ENCODE measurements at regions of chr3 and their contacts with region 1.

Region 1: DNA sequence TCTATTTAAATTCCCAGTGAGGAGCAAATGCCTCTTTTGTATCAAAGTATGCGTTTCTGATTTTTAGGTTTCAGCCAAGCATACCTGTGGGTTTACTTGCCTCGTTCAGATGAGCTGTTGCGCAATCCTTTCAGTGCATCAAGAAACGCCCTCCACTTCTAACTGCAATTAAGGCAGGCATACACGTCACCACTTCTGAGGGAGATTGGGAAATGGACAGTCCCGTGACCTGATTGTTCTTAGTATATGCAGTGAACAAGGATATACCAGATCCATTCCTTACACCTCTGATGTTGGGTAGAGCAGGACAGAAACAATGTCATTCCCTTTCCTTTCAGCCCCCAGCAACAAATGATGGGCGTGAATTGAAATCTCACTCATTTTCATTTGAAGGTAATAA is 219.0 kb downstream of the ITPR1 start:
- DNase-seq: no peak
- ATAC-seq: no peak
- H3K4me3 ChIP-seq: no peak overlapping the region
- H3K27ac ChIP-seq: no peak overlapping the region
- H3K4me1 ChIP-seq: no peaks in the 10 kb centered on the region
- H3K27me3 ChIP-seq: no peaks in the 10 kb centered on the region
- CTCF ChIP-seq: no peak
- EP300 ChIP-seq: no peak
- POLR2A ChIP-seq: no peak
- RAD21 ChIP-seq: no peak

Region 2: DNA sequence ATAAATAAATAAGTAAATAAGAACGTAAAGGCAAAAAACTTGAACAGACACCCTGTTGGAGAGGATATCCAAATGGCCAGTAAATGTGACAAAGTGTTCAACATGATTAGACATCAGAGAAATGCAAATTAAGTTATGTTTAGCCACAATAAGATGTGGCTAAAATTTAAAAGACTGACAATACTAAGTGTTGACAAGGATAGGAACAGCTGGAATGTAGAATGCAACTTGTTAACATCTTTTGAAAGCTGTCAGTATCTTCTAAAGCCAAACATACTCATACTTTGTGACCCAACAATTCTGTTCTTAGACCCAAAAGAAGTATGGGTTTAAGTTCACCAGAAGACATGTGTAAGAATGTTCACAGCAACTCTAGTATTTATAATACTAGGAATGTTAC is 21.9 kb before region 1 on chr3:
- CTCF ChIA-PET with region 1: interaction called, 10 read pairs
- POLR2A ChIA-PET with region 1: no interaction called
- RAD21 ChIA-PET with region 1: interaction called, 5 read pairs
- SMC1A ChIA-PET with region 1: interaction called, 6 read pairs
- in situ Hi-C with region 1: no loop called
- intact Hi-C with region 1: no loop called
- DNase-seq: no peak
- ATAC-seq: no peak
- H3K4me3 ChIP-seq: no peak overlapping the region
- H3K27ac ChIP-seq: no peak overlapping the region
- H3K4me1 ChIP-seq: peaks cover 10% of the 10 kb centered on the region
- H3K27me3 ChIP-seq: no peaks in the 10 kb centered on the region
- CTCF ChIP-seq: no peak
- EP300 ChIP-seq: no peak
- POLR2A ChIP-seq: no peak
- RAD21 ChIP-seq: no peak

Region 3: GRCh38 chr3:4776980-4777581 is 64.9 kb after region 1 on chr3:
- CTCF ChIA-PET with region 1: interaction called, 5 read pairs
- POLR2A ChIA-PET with region 1: no interaction called
- RAD21 ChIA-PET with region 1: interaction called, 13 read pairs
- SMC1A ChIA-PET with region 1: interaction called, 9 read pairs
- in situ Hi-C with region 1: no loop called
- intact Hi-C with region 1: loop called (anchors 1 kb)
- DNase-seq: peak; percentile 98
- ATAC-seq: peak; percentile 82
- H3K4me3 ChIP-seq: no peak overlapping the region
- H3K27ac ChIP-seq: peak overlapping the region; percentile 99
- H3K4me1 ChIP-seq: peaks cover 32% of the 10 kb centered on the region
- H3K27me3 ChIP-seq: no peaks in the 10 kb centered on the region
- CTCF ChIP-seq: no peak
- EP300 ChIP-seq: peak; percentile 90 to 97; a peak in 3 of 4 replicates
- POLR2A ChIP-seq: peak; percentile 53; the same call in 1 of the 2 replicates
- RAD21 ChIP-seq: peak; percentile 41

Region 4: GRCh38 chr3:4826237-4827100 is 114.3 kb after region 1 on chr3:
- CTCF ChIA-PET with region 1: interaction called, 8 read pairs
- POLR2A ChIA-PET with region 1: no interaction called
- RAD21 ChIA-PET with region 1: interaction called, 16 read pairs
- SMC1A ChIA-PET with region 1: interaction called, 8 read pairs
- in situ Hi-C with region 1: no loop called
- intact Hi-C with region 1: no loop called
- DNase-seq: no peak
- ATAC-seq: peak; percentile 9
- H3K4me3 ChIP-seq: no peak overlapping the region
- H3K27ac ChIP-seq: no peak overlapping the region
- H3K4me1 ChIP-seq: peaks cover 21% of the 10 kb centered on the region
- H3K27me3 ChIP-seq: no peaks in the 10 kb centered on the region
- CTCF ChIP-seq: no peak
- EP300 ChIP-seq: no peak
- POLR2A ChIP-seq: peak; percentile 31; the same call in 1 of the 2 replicates
- RAD21 ChIP-seq: no peak

Region 5: GRCh38 chr3:4898454-4899313 is 186.5 kb after region 1 on chr3:
- CTCF ChIA-PET with region 1: interaction called, 13 read pairs
- POLR2A ChIA-PET with region 1: no interaction called
- RAD21 ChIA-PET with region 1: no interaction called
- SMC1A ChIA-PET with region 1: interaction called, 4 read pairs
- in situ Hi-C with region 1: no loop called
- intact Hi-C with region 1: no loop called
- DNase-seq: peak; percentile 53
- ATAC-seq: peak; percentile 97
- H3K4me3 ChIP-seq: no peak overlapping the region; the same call in 1 of the 2 replicates
- H3K27ac ChIP-seq: peak overlapping the region; percentile 28
- H3K4me1 ChIP-seq: peaks cover 16% of the 10 kb centered on the region
- H3K27me3 ChIP-seq: no peaks in the 10 kb centered on the region
- CTCF ChIP-seq: no peak
- EP300 ChIP-seq: peak; percentile 69 to 91; a peak in 3 of 4 replicates
- POLR2A ChIP-seq: no peak
- RAD21 ChIP-seq: no peak

Region 6: GRCh38 chr3:5026331-5027218 is 314.4 kb after region 1 on chr3:
- CTCF ChIA-PET with region 1: interaction called, 63 read pairs
- POLR2A ChIA-PET with region 1: interaction called, 3 read pairs
- RAD21 ChIA-PET with region 1: interaction called, 22 read pairs
- SMC1A ChIA-PET with region 1: interaction called, 9 read pairs
- in situ Hi-C with region 1: no loop called
- intact Hi-C with region 1: loop called (anchors 1 kb)
- DNase-seq: no peak
- ATAC-seq: peak; percentile 83
- H3K4me3 ChIP-seq: peak overlapping the region; percentile 61; the same call in 1 of the 2 replicates
- H3K27ac ChIP-seq: peak overlapping the region; percentile 68
- H3K4me1 ChIP-seq: peaks cover 31% of the 10 kb centered on the region
- H3K27me3 ChIP-seq: no peaks in the 10 kb centered on the region
- CTCF ChIP-seq: peak; percentile 63 to 72 (median 71)
- EP300 ChIP-seq: no peak; a peak in 1 of 4 replicates
- POLR2A ChIP-seq: 0 out of 2 replicates have a peak, but pooled peaks have one; percentile 31
- RAD21 ChIP-seq: peak; percentile 86

Region 7: DNA sequence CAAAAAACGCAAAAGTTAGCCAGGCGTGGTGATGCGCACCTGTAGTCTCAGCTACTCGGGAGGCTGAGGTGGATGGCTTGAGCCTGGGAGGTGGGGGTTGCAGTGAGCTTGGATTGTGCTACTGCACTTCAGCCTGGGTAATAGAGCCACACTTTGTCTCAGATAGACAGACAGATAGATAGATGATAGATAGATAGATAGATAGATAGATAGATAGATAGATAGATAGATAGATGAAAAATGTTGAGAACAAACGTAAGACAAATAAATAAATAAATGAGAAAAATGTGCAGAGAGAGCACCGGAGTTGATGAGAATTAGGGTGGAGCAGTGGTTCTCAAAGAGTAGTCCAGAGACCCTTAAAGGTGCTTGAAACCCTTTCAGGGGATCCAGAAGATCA is 351.6 kb after region 1 on chr3:
- CTCF ChIA-PET with region 1: interaction called, 201 read pairs
- POLR2A ChIA-PET with region 1: no interaction called
- RAD21 ChIA-PET with region 1: interaction called, 148 read pairs
- SMC1A ChIA-PET with region 1: interaction called, 203 read pairs
- in situ Hi-C with region 1: loop called (anchors 5 kb)
- intact Hi-C with region 1: no loop called
- DNase-seq: no peak
- ATAC-seq: no peak
- H3K4me3 ChIP-seq: no peak overlapping the region
- H3K27ac ChIP-seq: no peak overlapping the region
- H3K4me1 ChIP-seq: no peaks in the 10 kb centered on the region
- H3K27me3 ChIP-seq: no peaks in the 10 kb centered on the region; a peak in 2 of 4 replicates
- CTCF ChIP-seq: no peak
- EP300 ChIP-seq: no peak
- POLR2A ChIP-seq: no peak
- RAD21 ChIP-seq: no peak

Measured in GM12878 (cell line).